Esophagus squamous epithelium (tissue), 5 donors: ENCODE measurements at regions of chr16 and their contacts with region 1.

Region 1: DNA sequence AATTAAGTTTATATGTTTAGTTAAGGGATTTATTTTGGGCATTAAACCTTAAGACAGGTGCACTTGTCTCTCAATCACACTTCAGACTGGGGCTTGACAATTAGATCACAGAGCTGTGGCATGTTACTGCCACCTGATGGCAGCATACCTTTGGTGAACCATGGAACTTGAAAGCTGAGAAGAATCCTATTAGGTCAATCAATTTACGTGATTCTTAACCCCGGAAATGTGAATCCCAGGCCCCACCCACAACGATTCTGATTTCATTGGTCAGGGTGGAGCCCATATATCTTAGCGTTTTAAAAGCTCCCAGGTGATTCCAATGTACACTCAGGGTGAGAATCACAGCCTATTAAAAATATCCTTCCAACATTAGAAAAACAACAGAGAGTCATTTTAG is 91.0 kb downstream of the GSG1L start:
- DNase-seq: no peak
- H3K4me3 ChIP-seq: no peak overlapping the region
- H3K27ac ChIP-seq: no peak overlapping the region
- H3K4me1 ChIP-seq: no peaks in the 10 kb centered on the region
- H3K27me3 ChIP-seq: peaks cover 0 to 13% (median 0%) of the 10 kb centered on the region in 4 donors
- CTCF ChIP-seq: peak in 5 of 6 experiments; percentile 32 to 62 (median 45)
- POLR2A ChIP-seq: no peak

Region 2: GRCh38 chr16:27639561-27640276 is 332.8 kb before region 1 on chr16:
- intact Hi-C with region 1: loop called (anchors 10 kb)
- DNase-seq: no peak
- H3K4me3 ChIP-seq: no peak overlapping the region
- H3K27ac ChIP-seq: peak overlapping the region; percentile 76 to 91 (median 88)
- H3K4me1 ChIP-seq: peaks cover 13 to 72% (median 18%) of the 10 kb centered on the region in 3 donors
- H3K27me3 ChIP-seq: no peaks in the 10 kb centered on the region
- CTCF ChIP-seq: peak in 5 of 6 experiments; percentile 37 to 71 (median 50)
- POLR2A ChIP-seq: no peak

Region 3: GRCh38 chr16:27920391-27920891 is 52.1 kb before region 1 on chr16:
- intact Hi-C with region 1: no loop called
- DNase-seq: no peak
- H3K4me3 ChIP-seq: no peak overlapping the region
- H3K27ac ChIP-seq: no peak overlapping the region
- H3K4me1 ChIP-seq: peaks cover 0 to 17% (median 0%) of the 10 kb centered on the region in 3 donors
- H3K27me3 ChIP-seq: peaks cover 0 to 49% (median 0%) of the 10 kb centered on the region in 4 donors
- CTCF ChIP-seq: peak in 4 of 6 experiments; percentile 27 to 59 (median 42)
- POLR2A ChIP-seq: no peak

Region 4: DNA sequence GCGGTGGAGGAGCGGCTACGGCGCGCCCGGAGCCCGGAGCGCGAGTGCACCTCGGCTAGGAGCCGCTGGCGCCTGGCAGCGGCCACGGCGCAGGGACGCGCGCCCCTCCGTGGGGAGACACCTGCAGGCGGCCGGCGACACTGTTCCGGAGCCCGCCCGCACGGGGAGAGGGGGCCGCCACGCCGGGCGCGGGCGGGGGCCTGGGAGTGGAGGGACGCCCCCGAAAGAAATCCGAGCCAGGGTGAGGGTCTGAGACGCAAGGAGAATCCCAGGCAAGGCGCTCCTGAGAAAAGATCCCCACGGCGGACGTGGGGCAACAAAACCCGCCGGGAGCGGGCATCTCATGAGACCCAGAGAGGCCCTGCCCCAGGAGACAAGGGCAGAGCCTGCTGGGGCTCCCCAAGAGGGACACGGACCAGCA is 91.2 kb after region 1 on chr16 and contains the start of gene GSG1L:
- intact Hi-C with region 1: loop called (anchors 10 kb)
- DNase-seq: no peak
- H3K4me3 ChIP-seq: peak within 1 kb of the TSS; percentile 4 to 56 (median 36)
- H3K27ac ChIP-seq: no peak within 1 kb of the TSS
- H3K4me1 ChIP-seq: peaks cover 0 to 17% (median 13%) of the 10 kb centered on the region in 3 donors
- H3K27me3 ChIP-seq: peaks cover 9 to 74% (median 12%) of the 10 kb centered on the region in 4 donors
- CTCF ChIP-seq: peak in 1 of 6 experiments; percentile 14
- POLR2A ChIP-seq: no peak
- total RNA-seq, gene GSG1L: under 0.01 to 0.21 TPM in 2 of 4 donors, not detected in the others